GM18951 (cell line): ENCODE measurements at regions of chr4 and their contacts with region 1.

Region 1: DNA sequence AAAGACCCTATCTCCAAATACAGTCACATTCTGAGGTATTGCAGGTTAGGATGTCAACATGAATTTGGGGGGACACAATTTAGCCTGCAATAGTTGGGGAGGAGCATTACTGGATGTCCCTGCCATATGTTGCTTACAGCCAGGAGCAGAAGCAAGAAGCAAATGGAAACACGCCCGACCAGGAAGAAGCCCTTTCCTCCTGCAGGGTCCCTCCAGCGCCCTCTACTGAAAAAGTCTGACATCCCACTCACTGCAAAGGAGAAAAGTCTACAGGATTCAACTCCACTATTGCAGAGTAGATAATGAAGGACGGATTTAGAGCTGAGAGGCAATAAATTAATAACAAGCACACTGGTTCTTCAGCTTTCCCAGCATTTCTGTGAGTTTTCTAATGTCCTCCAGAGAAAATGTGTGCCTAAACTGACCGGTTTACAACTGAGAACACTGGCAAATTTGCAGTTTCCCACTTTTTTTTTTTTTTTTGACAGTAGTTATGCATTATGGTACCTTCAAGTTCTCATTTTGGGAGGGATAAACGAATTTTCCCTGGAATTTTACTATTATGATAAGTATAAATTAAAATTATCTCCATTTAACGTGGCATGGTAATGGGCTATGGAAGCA is 31.7 kb downstream of the COQ2 start:
- POLR2A ChIP-seq: no peak

Region 2: DNA sequence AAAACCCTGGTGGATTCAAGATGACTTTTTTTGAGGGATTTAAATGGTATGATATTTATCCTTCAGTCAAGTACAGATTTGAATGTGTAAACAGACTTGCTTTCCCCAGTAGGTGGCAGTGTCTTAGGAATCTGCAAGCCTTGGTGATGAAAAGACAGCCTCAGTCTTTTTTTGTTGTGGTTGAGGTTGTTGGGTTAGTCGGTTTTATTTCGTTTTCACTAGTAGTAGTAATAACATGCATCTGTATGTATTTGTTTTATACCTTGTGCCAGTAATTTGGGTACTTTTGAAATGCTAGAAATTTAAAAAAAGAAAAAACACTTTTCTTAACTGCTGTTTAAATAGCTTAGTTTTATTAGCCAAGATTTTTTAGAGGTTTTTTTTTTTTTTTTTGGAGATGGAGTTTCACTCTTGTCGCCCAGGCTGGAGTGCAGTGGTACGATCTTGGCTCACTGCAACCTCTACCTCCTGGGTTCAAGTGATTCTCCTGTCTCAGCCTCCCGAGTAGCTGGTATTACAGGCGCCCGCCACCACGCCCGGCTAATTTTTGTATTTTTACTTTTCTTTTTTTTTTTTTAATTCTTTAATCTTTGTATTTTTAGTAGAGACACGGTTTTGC is 178.7 kb before region 1 on chr4:
- in situ Hi-C with region 1: loop called (anchors 10 kb)
- POLR2A ChIP-seq: no peak

Region 3: DNA sequence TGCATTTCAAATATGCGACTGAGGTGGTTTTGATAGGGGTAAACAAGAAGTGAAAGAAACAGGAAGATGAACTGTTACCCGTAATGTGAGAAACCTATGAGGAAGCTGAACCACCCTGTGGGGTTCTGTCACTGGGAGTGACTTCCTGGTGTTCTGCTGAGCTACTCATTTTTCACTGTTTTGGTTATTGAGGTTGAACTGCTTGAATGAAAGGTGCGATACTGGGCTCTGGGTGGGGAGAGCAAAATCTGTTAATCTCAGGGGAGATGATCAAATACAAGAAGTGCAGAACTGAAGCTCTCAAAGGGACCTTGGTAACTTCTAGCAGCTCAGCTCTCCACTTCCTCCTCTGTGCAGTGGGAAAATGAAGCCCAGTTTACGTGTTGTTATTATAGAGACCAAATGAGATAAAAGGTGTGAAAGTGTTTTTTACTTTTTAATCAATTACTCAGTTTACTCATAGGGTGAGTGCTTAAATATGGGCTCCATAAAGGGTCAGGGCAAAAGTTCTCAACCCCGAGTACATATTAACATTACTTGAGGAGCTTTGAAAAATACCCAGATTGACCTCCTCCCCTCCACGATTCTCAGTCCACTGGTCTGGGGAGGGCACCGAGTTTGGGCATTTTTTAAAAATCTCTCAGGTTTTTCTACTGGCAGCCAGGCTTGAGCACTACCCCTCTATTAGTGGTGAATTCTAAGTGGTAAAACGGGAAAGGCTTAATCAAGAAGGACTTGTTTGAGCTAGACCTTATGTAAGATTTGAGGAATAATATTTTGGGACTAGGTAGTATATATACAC is 35.0 kb before region 1 on chr4:
- in situ Hi-C with region 1: loop called (anchors 5 kb)
- POLR2A ChIP-seq: peak; percentile 33

Region 4: GRCh38 chr4:83362492-83363329 is 109.8 kb after region 1 on chr4:
- in situ Hi-C with region 1: no loop called
- POLR2A ChIP-seq: no peak